IMR-90 (cell line): ENCODE measurements at regions of chr3 and their contacts with region 1.

Region 1: GRCh38 chr3:64073158-64073761 is 50.0 kb upstream of the PSMD6 start:
- DNase-seq: peak; percentile 8
- ATAC-seq: peak; percentile 35; the same call in 1 of the 2 replicates
- H3K4me3 ChIP-seq: no peak overlapping the region
- H3K27ac ChIP-seq: no peak overlapping the region; the same call in 1 of the 2 replicates
- H3K4me1 ChIP-seq: peaks cover 3% of the 10 kb centered on the region; the same call in 1 of the 2 replicates
- H3K27me3 ChIP-seq: no peaks in the 10 kb centered on the region; the same call in 1 of the 2 replicates
- CTCF ChIP-seq: no peak
- POLR2A ChIP-seq: no peak
- RAD21 ChIP-seq: no peak

Region 2: GRCh38 chr3:64090245-64090644 is 17.0 kb after region 1 on chr3:
- CTCF ChIA-PET with region 1: no interaction called
- POLR2A ChIA-PET with region 1: interaction called, 20 read pairs
- dilution Hi-C with region 1: no loop called
- in situ Hi-C with region 1: no loop called
- intact Hi-C with region 1: no loop called
- DNase-seq: no peak
- ATAC-seq: no peak
- H3K4me3 ChIP-seq: no peak overlapping the region
- H3K27ac ChIP-seq: no peak overlapping the region
- H3K4me1 ChIP-seq: no peaks in the 10 kb centered on the region; the same call in 1 of the 2 replicates
- H3K27me3 ChIP-seq: no peaks in the 10 kb centered on the region
- CTCF ChIP-seq: no peak
- POLR2A ChIP-seq: no peak
- RAD21 ChIP-seq: no peak